Activated CD4-positive, alpha-beta memory T cell treated with anti-CD3 and anti-CD28 coated beads, Interleukin-2, amount 10 ng/mL, durations not matched to agents 7 days and 5 days (primary cell): ENCODE measurements at regions of chrX and their contacts with region 1.

Region 1: GRCh38 chrX:55717521-55718497 is at the start of gene RRAGB:
- DNase-seq: peak; percentile 92
- H3K4me3 Mint-ChIP-seq: peak within 1 kb of the TSS; percentile 85
- H3K27ac Mint-ChIP-seq: peak within 1 kb of the TSS; percentile 88
- H3K4me1 Mint-ChIP-seq: peaks cover 22% of the 10 kb centered on the region
- H3K27me3 Mint-ChIP-seq: no peaks in the 10 kb centered on the region
- total RNA-seq, gene RRAGB: 7.1 to 7.5 TPM

Region 2: GRCh38 chrX:55480390-55481062 is 237.3 kb before region 1 on chrX:
- CTCF ChIA-PET with region 1: no interaction called
- POLR2A ChIA-PET with region 1: no interaction called
- DNase-seq: no peak
- H3K4me3 Mint-ChIP-seq: no peak overlapping the region
- H3K27ac Mint-ChIP-seq: no peak overlapping the region
- H3K4me1 Mint-ChIP-seq: no peaks in the 10 kb centered on the region
- H3K27me3 Mint-ChIP-seq: no peaks in the 10 kb centered on the region

Region 3: GRCh38 chrX:55702671-55703070 is 15.1 kb before region 1 on chrX:
- CTCF ChIA-PET with region 1: no interaction called
- POLR2A ChIA-PET with region 1: no interaction called
- DNase-seq: no peak
- H3K4me3 Mint-ChIP-seq: no peak overlapping the region
- H3K27ac Mint-ChIP-seq: no peak overlapping the region
- H3K4me1 Mint-ChIP-seq: peaks cover 17% of the 10 kb centered on the region
- H3K27me3 Mint-ChIP-seq: no peaks in the 10 kb centered on the region

Region 4: GRCh38 chrX:55907968-55908607 is 190.3 kb after region 1 on chrX:
- CTCF ChIA-PET with region 1: interaction called, 26 read pairs
- POLR2A ChIA-PET with region 1: interaction called, 18 read pairs
- DNase-seq: peak; percentile 66
- H3K4me3 Mint-ChIP-seq: peak overlapping the region; percentile 82
- H3K27ac Mint-ChIP-seq: peak overlapping the region; percentile 91
- H3K4me1 Mint-ChIP-seq: peaks cover 21% of the 10 kb centered on the region
- H3K27me3 Mint-ChIP-seq: no peaks in the 10 kb centered on the region